ENCODE measurements at regions of chr14 and their contacts with region 1.

Region 1: GRCh38 chr14:34496679-34497513 is 34.9 kb upstream of the SPTSSA start:
- DNase-seq: peak; percentile 82 to 92
- H3K4me3 ChIP-seq: no peak overlapping the region
- CTCF ChIP-seq: no peak
- POLR2A ChIP-seq: no peak

Region 2: GRCh38 chr14:33617190-33617622 is 879.7 kb before region 1 on chr14:
- intact Hi-C with region 1: no loop called
- DNase-seq: no peak
- H3K4me3 ChIP-seq: no peak overlapping the region
- CTCF ChIP-seq: no peak
- POLR2A ChIP-seq: no peak

Region 3: DNA sequence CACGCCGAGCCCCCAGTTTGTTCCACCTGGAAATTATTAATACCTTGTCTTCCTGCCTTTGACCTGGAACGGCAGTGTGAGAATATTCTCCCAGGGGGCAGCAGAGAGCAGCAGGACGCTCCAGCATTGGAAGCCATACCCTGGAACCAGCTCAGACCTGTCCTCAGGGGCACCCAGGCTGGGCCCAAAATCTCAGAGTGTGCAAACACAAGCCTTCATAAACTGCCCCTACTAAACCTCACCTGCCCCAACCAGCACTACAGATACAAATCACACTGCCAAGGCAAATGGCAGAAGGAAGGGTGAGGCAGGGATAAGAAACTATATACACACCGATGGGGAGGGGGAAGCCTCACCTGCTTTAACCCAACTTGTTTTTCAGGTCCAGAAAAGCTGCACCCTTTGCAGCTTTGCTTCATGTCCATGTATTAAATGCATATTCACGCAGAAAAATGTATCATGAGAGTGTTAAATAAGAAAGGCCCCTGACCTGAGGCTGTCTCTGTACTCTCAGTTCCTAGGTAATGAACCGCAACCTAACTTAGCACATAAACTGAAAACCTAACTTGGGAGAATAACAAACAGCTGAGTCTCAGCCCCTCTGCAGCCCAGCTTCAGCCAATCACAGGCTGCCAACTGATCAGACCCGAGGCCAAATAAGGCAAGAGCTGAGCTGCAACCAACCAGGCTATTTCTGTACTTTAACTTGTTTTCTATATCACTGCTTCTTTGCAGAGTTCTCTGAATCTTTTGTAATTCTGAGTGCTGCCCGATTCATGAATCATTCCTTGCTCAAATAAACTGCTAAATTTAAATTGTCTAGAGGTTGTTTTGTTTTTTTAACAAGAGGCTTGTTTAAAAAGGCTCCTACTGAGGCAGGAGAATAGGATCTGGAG is 164.9 kb before region 1 on chr14:
- intact Hi-C with region 1: loop called (anchors 5 kb)
- DNase-seq: peak; percentile 57 to 92
- H3K4me3 ChIP-seq: no peak overlapping the region
- CTCF ChIP-seq: peak in 1 of 3 donors; percentile 35
- POLR2A ChIP-seq: no peak

Measured in lower leg skin (tissue), 4 donors.